Dendritic cell treated with granulocyte-macrophage colony-stimulating factor and Interleukin-4, amounts not matched to agents 40 ng/mL and 50 ng/mL, for 4 days (primary cell): ENCODE measurements at regions of chr6 and their contacts with region 1.

Region 1: GRCh38 chr6:148464319-148465010 is 121.8 kb downstream of the SASH1 start:
- H3K4me3 Mint-ChIP-seq: no peak overlapping the region
- H3K27ac Mint-ChIP-seq: no peak overlapping the region
- H3K4me1 Mint-ChIP-seq: peaks cover 40% of the 10 kb centered on the region
- H3K27me3 Mint-ChIP-seq: peaks cover 8% of the 10 kb centered on the region

Region 2: GRCh38 chr6:148144917-148145521 is 319.4 kb before region 1 on chr6:
- intact Hi-C with region 1: loop called (anchors 10 kb)
- H3K4me3 Mint-ChIP-seq: no peak overlapping the region
- H3K27ac Mint-ChIP-seq: no peak overlapping the region
- H3K4me1 Mint-ChIP-seq: no peaks in the 10 kb centered on the region
- H3K27me3 Mint-ChIP-seq: peaks cover 7% of the 10 kb centered on the region

Region 3: GRCh38 chr6:148177589-148178233 is 286.8 kb before region 1 on chr6:
- intact Hi-C with region 1: loop called (anchors 1 kb)
- H3K4me3 Mint-ChIP-seq: no peak overlapping the region
- H3K27ac Mint-ChIP-seq: no peak overlapping the region
- H3K4me1 Mint-ChIP-seq: peaks cover 5% of the 10 kb centered on the region
- H3K27me3 Mint-ChIP-seq: peaks cover 12% of the 10 kb centered on the region

Region 4: GRCh38 chr6:148342357-148343046 is 122.0 kb before region 1 on chr6 and contains the start of gene SASH1:
- intact Hi-C with region 1: loop called (anchors 2 kb)
- H3K4me3 Mint-ChIP-seq: peak within 1 kb of the TSS; percentile 76
- H3K27ac Mint-ChIP-seq: peak within 1 kb of the TSS; percentile 87
- H3K4me1 Mint-ChIP-seq: peaks cover 16% of the 10 kb centered on the region
- H3K27me3 Mint-ChIP-seq: peaks cover 62% of the 10 kb centered on the region

Region 5: DNA sequence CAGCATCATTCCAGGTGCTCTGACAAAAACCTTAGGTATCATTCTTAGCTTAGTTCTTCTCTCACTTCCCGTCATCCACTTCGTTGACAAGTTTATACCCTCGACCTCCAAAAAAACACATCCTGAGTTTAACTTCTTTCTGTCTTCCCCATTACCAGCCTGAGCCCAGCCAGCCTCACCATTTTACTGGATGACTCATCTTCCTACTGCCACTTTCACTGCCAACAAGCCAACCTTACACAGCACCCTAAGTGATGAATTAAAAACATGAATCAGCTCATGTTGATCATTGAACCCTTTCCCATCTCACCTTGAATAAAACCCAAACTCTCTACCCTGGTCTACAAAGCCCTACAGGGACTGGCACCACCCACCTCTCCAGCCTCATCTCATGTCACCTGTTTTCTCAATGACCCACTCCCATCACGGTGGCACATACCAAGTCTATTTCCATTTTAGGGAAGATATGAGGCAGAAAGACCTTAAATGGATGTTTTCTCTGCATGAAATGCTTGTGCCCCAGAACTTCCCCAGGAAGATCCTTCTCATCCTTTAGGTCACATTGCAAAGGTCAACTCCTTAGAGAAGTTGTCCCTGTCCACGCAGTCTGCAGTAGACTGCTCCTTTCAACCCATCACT is 272.4 kb after region 1 on chr6:
- intact Hi-C with region 1: no loop called
- H3K4me3 Mint-ChIP-seq: no peak overlapping the region
- H3K27ac Mint-ChIP-seq: no peak overlapping the region
- H3K4me1 Mint-ChIP-seq: peaks cover 11% of the 10 kb centered on the region
- H3K27me3 Mint-ChIP-seq: no peaks in the 10 kb centered on the region